Activated CD8-positive, alpha-beta T cell treated with anti-CD3 and anti-CD28 coated beads for 36 hours (primary cell): ENCODE measurements at regions of chr1 and their contacts with region 1.

Region 1: DNA sequence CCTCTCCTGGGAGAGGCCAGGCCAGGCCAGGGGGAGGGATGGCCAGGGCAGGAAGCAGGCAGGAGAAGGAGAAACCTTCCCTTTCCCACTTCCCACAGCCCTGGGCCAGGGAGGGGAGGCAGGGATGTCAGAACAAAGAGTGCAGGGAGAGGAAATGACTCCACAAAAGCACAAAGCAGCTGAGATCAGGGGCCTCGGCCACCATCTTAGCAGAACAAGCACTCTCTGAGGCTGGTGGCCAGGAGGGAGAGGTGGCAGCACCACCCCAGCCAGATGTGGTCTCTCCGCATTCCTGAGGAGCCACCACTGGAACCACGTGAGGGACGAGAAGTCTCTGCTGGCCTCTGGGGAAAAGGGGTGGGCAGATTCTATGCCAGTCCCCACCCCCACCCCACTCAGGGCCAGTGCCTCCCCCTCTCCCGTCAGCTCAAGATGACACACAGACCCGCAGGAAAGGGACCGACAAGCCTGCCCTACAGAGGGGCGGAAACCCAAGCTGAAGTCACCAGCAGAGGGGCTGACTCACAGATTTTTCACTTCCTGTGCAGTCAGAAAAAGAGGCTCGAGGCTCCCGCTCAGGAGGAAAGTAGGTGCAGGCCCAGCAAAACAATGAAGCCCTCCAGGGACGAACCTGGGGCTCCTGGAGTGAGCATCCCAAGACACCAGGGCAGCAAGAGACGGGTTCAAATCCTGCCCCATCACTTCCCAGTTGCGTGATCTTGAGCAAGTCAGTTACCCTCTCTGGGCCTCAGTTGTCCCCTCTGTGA is 24.1 kb upstream of the ALDH4A1 start:
- DNase-seq: peak; percentile 94
- ATAC-seq: peak; percentile 88
- H3K4me3 Mint-ChIP-seq: peak overlapping the region; percentile 82
- H3K27ac Mint-ChIP-seq: peak overlapping the region; percentile 99
- H3K4me1 Mint-ChIP-seq: peaks cover 81% of the 10 kb centered on the region
- H3K27me3 Mint-ChIP-seq: no peaks in the 10 kb centered on the region
- CTCF ChIP-seq: no peak

Region 2: DNA sequence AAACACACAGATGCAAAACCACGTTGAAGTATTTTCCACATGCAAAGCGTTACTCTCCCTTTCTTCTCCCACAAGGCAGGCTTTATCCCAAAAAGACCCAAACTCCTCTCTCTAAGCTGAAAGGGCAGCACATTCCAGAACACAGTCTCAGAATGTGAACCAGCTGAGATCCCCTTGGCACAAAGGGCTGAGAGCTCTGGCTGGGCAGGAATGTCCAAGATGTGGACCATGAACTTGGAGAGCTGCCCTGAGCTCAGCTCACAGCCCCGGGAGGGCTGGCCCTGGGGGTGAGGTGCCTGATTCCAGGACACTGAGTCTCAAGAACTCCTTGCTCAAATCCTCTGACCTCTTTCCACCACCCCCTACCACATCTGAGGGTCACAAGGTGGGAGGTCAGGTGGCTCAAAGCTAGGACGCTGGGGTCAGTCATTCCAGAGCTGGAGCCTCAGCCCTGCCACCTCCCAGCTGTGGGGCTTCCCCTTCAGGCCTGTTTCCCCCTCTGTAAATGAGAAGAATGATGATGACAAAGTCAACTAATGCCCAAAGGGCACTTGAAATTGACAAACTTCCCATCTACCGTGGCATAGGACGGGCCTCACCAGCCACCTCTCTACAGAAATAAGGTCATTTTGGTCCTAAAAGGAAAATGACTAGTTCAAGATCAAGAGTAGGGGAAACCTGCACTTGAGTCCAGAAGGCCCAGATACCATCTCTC is 35.6 kb before region 1 on chr1:
- CTCF ChIA-PET with region 1: no interaction called
- POLR2A ChIA-PET with region 1: no interaction called
- intact Hi-C with region 1: no loop called
- DNase-seq: no peak
- ATAC-seq: no peak
- H3K4me3 Mint-ChIP-seq: no peak overlapping the region
- H3K27ac Mint-ChIP-seq: no peak overlapping the region
- H3K4me1 Mint-ChIP-seq: no peaks in the 10 kb centered on the region
- H3K27me3 Mint-ChIP-seq: no peaks in the 10 kb centered on the region
- CTCF ChIP-seq: no peak

Region 3: GRCh38 chr1:18941221-18942141 is 15.0 kb after region 1 on chr1:
- CTCF ChIA-PET with region 1: interaction called, 6 read pairs
- POLR2A ChIA-PET with region 1: interaction called, 24 read pairs
- intact Hi-C with region 1: no loop called
- DNase-seq: no peak
- ATAC-seq: no peak
- H3K4me3 Mint-ChIP-seq: no peak overlapping the region
- H3K27ac Mint-ChIP-seq: no peak overlapping the region
- H3K4me1 Mint-ChIP-seq: peaks cover 56% of the 10 kb centered on the region
- H3K27me3 Mint-ChIP-seq: no peaks in the 10 kb centered on the region
- CTCF ChIP-seq: no peak

Region 4: GRCh38 chr1:18949686-18950400 is 23.3 kb after region 1 on chr1:
- CTCF ChIA-PET with region 1: interaction called, 19 read pairs
- POLR2A ChIA-PET with region 1: interaction called, 139 read pairs
- intact Hi-C with region 1: loop called (anchors 2 kb)
- DNase-seq: peak; percentile 42
- ATAC-seq: no peak
- H3K4me3 Mint-ChIP-seq: peak overlapping the region; percentile 82
- H3K27ac Mint-ChIP-seq: peak overlapping the region; percentile 93
- H3K4me1 Mint-ChIP-seq: peaks cover 95% of the 10 kb centered on the region
- H3K27me3 Mint-ChIP-seq: no peaks in the 10 kb centered on the region
- CTCF ChIP-seq: peak; percentile 20

Region 5: GRCh38 chr1:18956369-18957135 is 30.1 kb after region 1 on chr1 and contains the start of gene IFFO2:
- CTCF ChIA-PET with region 1: interaction called, 19 read pairs
- POLR2A ChIA-PET with region 1: interaction called, 139 read pairs
- intact Hi-C with region 1: loop called (anchors 2 kb)
- DNase-seq: peak; percentile 98
- ATAC-seq: peak; percentile 88
- H3K4me3 Mint-ChIP-seq: peak within 1 kb of the TSS; percentile 82
- H3K27ac Mint-ChIP-seq: peak within 1 kb of the TSS; percentile 85
- H3K4me1 Mint-ChIP-seq: peaks cover 55% of the 10 kb centered on the region
- H3K27me3 Mint-ChIP-seq: no peaks in the 10 kb centered on the region
- CTCF ChIP-seq: no peak
- total RNA-seq, gene IFFO2: 23.7 to 26.4 TPM

Region 6: DNA sequence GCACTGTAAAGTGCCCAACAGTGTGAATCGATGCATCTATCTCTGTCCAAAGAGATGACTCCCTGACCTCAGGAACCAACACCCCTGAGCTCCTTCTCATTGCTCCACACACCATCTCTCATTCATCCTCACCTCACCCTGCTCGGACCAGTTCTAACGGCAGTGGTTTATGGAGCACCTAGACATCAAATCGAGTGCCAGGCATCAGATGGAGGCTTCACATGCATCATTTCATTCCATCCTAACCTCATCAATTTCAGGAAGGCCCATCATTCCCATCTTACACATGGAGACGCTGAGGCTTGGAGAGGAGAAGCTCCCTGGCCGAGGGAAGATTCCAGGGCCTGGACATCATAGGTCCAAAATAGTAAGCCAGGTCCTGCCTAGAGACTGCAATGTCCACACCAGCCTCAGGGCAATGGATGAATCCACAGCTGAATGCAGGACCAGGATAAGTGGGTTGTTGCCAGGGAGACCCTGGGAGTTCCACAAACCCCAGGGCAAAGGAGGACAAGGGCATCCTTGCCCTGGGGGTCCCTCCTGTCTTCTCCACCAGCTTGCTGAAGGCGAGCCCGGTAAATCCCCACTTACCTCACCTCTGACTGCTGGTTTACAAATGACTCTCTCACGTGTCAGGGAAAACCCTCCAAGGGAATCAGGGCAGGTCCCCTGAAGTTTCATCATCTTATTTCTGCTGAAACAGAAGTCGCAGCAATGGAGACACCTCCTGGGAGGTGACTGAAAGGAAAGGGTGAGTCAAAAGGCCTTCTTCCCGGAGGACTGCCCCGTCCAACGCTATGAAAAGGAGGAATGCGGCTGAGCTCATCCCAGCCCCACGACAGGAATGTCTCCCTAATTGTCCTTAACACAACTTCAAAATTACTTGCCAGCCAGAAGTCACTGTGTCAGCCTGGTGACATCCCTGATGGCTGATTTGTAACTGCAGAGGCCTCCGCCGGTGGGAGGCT is 39.0 kb after region 1 on chr1:
- CTCF ChIA-PET with region 1: interaction called, 3 read pairs
- POLR2A ChIA-PET with region 1: interaction called, 13 read pairs
- intact Hi-C with region 1: no loop called
- DNase-seq: peak; percentile 71
- ATAC-seq: peak; percentile 84
- H3K4me3 Mint-ChIP-seq: no peak overlapping the region
- H3K27ac Mint-ChIP-seq: peak overlapping the region; percentile 78
- H3K4me1 Mint-ChIP-seq: peaks cover 16% of the 10 kb centered on the region
- H3K27me3 Mint-ChIP-seq: no peaks in the 10 kb centered on the region
- CTCF ChIP-seq: no peak